ENCODE measurements at regions of chr18 and their contacts with region 1.

Region 1: DNA sequence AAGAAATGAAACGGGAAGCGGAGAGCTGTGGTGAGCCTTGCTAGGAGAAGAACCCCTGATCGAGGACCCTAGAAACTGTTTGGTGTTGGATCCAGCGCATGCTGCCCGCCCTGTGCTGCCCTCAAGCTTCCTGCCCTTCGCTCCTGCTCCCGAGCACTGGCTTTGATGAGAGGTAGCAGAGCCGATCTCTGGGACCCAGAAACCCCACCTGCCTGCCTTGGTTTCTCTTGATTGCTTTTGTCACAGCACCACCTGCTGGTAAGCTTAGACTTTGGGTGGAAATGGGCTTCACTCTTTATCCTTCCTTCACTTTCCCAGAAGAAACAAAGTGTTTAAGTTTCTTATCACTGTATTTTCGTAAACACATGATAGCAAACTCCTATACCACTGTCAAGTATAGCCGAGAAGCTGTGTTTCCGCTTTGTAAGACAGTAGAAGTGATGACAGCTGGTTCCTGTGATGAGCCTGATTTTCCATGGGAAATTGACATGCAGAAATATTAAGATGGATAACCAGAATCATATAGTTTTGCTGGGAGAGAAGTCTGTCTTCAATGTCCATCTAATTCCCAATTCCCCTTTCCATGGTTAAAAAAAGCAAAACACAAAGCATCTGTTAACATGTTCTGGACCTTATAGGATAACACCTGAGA is 267.4 kb downstream of the PHLPP1 start:
- DNase-seq: peak in 9 of 10 donors; percentile 63 to 83 (median 69)
- H3K4me3 ChIP-seq: peak overlapping the region in 47 of 59 donors; percentile 3 to 56 (median 37)
- H3K27ac ChIP-seq: peak overlapping the region; percentile 13 to 99 (median 93)
- H3K27me3 ChIP-seq: no peaks in the 10 kb centered on the region
- CTCF ChIP-seq: peak; percentile 68 to 96 (median 88)

Region 2: GRCh38 chr18:62522504-62523254 is 460.0 kb before region 1 on chr18 and contains the start of gene ZCCHC2:
- intact Hi-C with region 1: loop called in 1 of 2 experiments (anchors 10 kb)
- DNase-seq: peak; percentile 96 to 100 (median 98)
- H3K4me3 ChIP-seq: peak within 1 kb of the TSS; percentile 70 to 98 (median 94)
- H3K27ac ChIP-seq: peak within 1 kb of the TSS; percentile 91 to 100 (median 98)
- H3K27me3 ChIP-seq: no peaks in the 10 kb centered on the region
- CTCF ChIP-seq: peak in 24 of 56 donors; percentile 0 to 53 (median 22)
- total RNA-seq, gene ZCCHC2: 26.3 to 65.9 (median 38.4) TPM

Region 3: GRCh38 chr18:62802523-62802922 is 180.2 kb before region 1 on chr18:
- intact Hi-C with region 1: loop called in 1 of 2 experiments (anchors 5 kb)
- DNase-seq: no peak
- H3K4me3 ChIP-seq: no peak overlapping the region
- H3K27ac ChIP-seq: peak overlapping the region in 31 of 59 donors; percentile 1 to 74 (median 38)
- H3K27me3 ChIP-seq: no peaks in the 10 kb centered on the region
- CTCF ChIP-seq: peak in 35 of 56 donors; percentile 4 to 59 (median 33)

Region 4: DNA sequence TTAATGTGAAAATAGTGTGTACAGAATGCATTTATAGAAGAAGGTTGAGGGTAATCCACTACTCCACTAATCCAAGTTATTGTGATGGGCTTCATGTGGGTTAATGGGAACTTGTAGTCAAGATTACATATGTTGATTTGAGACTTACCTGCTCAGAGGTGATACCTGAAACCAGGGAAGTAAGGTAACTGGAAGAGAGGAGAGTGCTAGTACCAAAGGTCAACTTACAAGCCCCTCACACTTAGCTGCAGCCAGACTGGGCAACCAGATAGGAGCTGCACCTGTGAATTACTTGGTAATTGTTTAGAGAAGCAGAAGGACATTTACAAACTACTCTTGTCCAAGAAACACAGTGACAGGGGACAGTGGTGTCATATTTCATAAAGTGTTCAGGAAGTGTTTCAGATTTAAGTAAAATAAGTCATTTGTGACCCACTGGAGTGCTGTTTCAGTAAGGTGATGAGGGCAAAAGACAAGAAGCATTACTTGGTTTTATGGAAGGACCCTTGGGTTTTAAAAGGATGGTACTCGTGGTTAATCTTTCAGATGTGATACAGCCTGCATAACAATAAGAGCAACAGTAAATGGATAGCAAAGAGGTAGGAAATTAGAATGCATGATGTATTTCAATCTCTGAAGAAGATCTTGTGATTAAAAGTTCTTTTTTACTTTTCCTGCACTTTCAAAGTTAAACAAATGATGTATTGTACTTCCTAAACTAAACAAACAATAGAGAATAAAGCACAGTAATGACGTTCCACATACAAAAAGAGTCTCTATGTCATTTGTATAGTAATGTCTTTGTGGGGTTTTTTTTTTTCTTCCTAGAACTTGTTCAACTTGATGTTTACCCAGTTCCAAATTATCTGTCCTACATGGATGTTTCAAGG is 78.1 kb before region 1 on chr18:
- intact Hi-C with region 1: loop called in 1 of 2 experiments (anchors 5 kb)
- DNase-seq: no peak
- H3K4me3 ChIP-seq: peak overlapping the region in 6 of 59 donors; percentile 1 to 36 (median 10)
- H3K27ac ChIP-seq: peak overlapping the region; percentile 63 to 100 (median 94)
- H3K27me3 ChIP-seq: no peaks in the 10 kb centered on the region
- CTCF ChIP-seq: peak in 2 of 56 donors; percentile 19

Region 5: DNA sequence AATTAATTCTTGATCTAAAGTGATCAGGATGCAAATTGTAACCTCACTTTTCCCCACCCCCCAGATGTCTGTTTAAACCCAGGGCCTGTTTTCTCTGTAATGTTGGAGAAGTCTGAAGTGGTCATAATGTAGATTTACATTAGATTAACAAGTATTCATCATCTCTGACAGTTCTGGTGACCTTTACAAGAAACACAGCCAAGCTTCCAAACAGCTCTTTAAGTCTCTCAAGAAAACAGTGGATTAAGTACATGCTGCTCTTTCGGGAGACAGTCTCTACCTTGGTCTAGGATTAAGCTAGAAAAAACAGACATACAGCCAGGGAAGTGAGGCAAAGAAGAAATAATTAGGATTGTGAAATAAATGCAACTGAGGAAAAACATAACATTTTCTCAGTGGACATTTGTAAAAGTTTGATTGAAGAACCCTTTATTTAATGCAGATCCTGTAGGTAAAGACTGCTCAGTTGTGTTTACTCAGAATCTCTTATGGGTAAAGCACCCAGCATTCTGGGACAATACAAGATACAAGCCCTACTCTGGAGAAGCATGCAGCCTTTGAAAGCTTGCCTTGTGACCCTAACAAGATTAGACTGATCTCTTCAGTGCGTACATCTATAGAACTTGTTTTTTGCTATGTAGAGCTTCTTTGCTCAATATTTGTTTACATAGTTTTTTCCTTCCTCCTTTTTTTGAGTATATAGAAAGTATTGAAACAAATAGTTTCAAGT is 63.5 kb before region 1 on chr18:
- intact Hi-C with region 1: loop called (anchors 5 kb)
- DNase-seq: no peak
- H3K4me3 ChIP-seq: no peak overlapping the region
- H3K27ac ChIP-seq: peak overlapping the region; percentile 13 to 100 (median 95)
- H3K27me3 ChIP-seq: no peaks in the 10 kb centered on the region
- CTCF ChIP-seq: no peak

Region 6: DNA sequence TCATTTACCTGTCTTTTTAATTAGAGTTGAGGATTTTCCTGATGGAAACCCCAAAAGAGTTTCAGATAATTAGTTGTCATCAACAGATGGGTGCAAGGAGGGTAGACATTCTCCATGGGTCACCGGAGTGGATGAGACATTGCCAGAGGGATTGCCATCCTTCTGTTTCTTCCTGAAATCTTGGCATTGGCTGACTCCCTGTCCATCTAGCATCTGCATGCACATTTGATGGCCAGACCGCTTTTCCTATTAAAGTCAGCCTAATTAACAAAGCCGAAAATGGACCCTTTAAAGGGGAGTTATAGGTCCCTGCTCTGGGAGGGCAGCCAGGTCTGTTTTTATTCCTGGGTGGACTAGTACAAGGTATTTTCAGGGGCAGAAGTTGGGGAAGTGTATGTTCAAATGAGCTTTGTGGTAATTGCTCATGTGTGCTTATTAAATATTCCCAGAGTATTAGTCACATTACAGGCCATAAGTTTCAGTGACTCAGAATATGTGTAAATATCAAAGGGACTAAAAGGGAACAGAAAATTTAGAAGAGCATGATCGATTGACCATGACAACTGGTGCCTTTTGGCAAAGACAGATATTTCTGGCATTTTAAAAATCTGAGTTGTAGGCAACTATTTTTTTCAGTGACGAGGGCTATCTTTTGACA is 57.6 kb before region 1 on chr18:
- intact Hi-C with region 1: loop called in 1 of 2 experiments (anchors 5 kb)
- DNase-seq: no peak
- H3K4me3 ChIP-seq: no peak overlapping the region
- H3K27ac ChIP-seq: peak overlapping the region in 45 of 59 donors; percentile 1 to 100 (median 45)
- H3K27me3 ChIP-seq: no peaks in the 10 kb centered on the region
- CTCF ChIP-seq: no peak

Region 7: GRCh38 chr18:63177919-63178821 is 195.4 kb after region 1 on chr18:
- intact Hi-C with region 1: no loop called
- DNase-seq: no peak
- H3K4me3 ChIP-seq: peak overlapping the region in 10 of 59 donors; percentile 3 to 33 (median 11)
- H3K27ac ChIP-seq: peak overlapping the region in 47 of 59 donors; percentile 2 to 89 (median 65)
- H3K27me3 ChIP-seq: no peaks in the 10 kb centered on the region
- CTCF ChIP-seq: no peak

Measured in dorsolateral prefrontal cortex (tissue), 120 donors.